ENCODE measurements at regions of chr6 and their contacts with region 1.

Region 1: DNA sequence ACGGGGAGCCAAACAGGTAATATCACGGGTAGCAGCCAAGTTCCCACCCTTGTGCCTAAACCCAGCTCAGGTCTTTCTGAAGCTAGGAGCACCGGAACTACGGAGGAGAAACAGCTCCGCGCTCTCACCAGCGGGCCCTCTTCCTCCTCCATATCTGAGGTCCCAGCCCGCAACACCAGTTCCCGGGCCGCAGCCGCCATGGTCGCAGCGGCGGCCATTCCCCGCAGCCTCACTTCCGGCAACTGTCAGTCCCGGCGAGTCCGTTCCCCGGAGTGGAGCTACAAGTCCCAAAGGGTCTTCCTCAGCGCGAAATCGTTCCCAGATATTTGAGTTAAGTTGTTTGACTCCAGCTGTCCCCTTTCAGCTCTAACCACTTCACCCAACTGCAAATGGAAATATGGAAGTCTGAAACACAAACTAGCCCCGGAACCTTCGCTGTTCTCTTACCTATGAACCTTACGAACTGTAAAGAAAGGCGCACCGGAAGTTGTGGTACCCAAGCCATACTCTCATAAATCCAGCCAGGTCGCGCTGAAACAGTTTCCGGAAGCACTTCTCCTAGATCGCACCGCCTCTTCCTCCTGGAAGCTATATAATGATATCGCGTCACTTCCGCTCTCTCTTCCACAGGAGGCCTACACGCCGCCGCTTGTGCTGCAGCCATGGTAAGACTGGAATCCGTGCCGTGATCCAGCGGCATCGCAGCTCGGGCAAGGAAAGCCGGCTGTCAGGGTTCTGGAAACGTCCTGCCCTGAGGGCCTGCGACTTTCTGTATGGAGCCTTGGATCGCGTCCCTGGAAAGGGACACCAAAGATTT is at the starts of genes RPS18 and VPS52:
- DNase-seq: peak; percentile 98 to 100 (median 99)
- H3K4me3 ChIP-seq: peak within 1 kb of the TSS; percentile 83 to 95 (median 91)
- H3K4me3 Mint-ChIP-seq: peak within 1 kb of the TSS; percentile 96 to 100
- H3K27ac ChIP-seq: peak within 1 kb of the TSS; percentile 93 to 99
- H3K27ac Mint-ChIP-seq: peak within 1 kb of the TSS; percentile 98 to 100 (median 100)
- H3K4me1 ChIP-seq: peaks cover 53 to 60% of the 10 kb centered on the region in 2 donors
- H3K4me1 Mint-ChIP-seq: peaks cover 58% of the 10 kb centered on the region
- H3K27me3 ChIP-seq: no peaks in the 10 kb centered on the region
- H3K27me3 Mint-ChIP-seq: no peaks in the 10 kb centered on the region
- CTCF ChIP-seq: no peak
- polyA plus RNA-seq, gene RPS18: 2,430 to 3,295 (median 2,894) TPM
- polyA plus RNA-seq, gene VPS52: 11.0 to 150 (median 14.5) TPM

Region 2: DNA sequence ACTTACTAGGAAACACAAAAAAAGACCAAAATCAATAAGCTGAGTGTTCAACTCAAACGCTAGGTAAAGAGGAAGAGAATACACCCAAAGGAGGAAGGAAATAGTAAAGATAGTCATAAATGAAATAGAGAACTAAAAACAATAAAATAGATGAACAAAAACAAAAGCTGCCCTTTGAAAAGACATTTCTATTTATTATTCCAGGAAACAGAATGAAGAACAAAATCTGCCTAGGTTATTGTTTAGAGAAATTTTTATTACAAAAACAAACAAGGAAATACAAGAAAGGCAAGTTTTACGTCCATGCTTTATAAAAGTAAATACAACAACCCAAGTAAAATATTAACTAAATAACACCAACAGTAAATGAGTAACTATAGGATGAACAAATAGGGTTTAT is 351.0 kb before region 1 on chr6:
- intact Hi-C with region 1: no loop called
- DNase-seq: peak in 2 of 3 donors; percentile 28 to 42
- H3K4me3 ChIP-seq: peak overlapping the region in 1 of 3 experiments; percentile 25
- H3K4me3 Mint-ChIP-seq: peak overlapping the region in 1 of 2 donors; percentile 64
- H3K27ac ChIP-seq: peak overlapping the region in 1 of 2 donors; percentile 49
- H3K27ac Mint-ChIP-seq: peak overlapping the region in 5 of 7 donors; percentile 0 to 59 (median 41)
- H3K4me1 ChIP-seq: peaks cover 12 to 32% of the 10 kb centered on the region in 2 donors
- H3K4me1 Mint-ChIP-seq: peaks cover 44% of the 10 kb centered on the region
- H3K27me3 ChIP-seq: no peaks in the 10 kb centered on the region
- H3K27me3 Mint-ChIP-seq: peaks cover 0 to 1% (median 0%) of the 10 kb centered on the region in 3 donors
- CTCF ChIP-seq: no peak

Region 3: GRCh38 chr6:33014841-33015634 is 256.6 kb before region 1 on chr6:
- intact Hi-C with region 1: no loop called
- DNase-seq: peak; percentile 79 to 82 (median 82)
- H3K4me3 ChIP-seq: no peak overlapping the region
- H3K4me3 Mint-ChIP-seq: peak overlapping the region in 1 of 2 donors; percentile 61
- H3K27ac ChIP-seq: no peak overlapping the region
- H3K27ac Mint-ChIP-seq: peak overlapping the region in 2 of 7 donors; percentile 33 to 35
- H3K4me1 ChIP-seq: peaks cover 36 to 42% of the 10 kb centered on the region in 2 donors
- H3K4me1 Mint-ChIP-seq: peaks cover 41% of the 10 kb centered on the region
- H3K27me3 ChIP-seq: no peaks in the 10 kb centered on the region
- H3K27me3 Mint-ChIP-seq: no peaks in the 10 kb centered on the region
- CTCF ChIP-seq: peak; percentile 85

Region 4: DNA sequence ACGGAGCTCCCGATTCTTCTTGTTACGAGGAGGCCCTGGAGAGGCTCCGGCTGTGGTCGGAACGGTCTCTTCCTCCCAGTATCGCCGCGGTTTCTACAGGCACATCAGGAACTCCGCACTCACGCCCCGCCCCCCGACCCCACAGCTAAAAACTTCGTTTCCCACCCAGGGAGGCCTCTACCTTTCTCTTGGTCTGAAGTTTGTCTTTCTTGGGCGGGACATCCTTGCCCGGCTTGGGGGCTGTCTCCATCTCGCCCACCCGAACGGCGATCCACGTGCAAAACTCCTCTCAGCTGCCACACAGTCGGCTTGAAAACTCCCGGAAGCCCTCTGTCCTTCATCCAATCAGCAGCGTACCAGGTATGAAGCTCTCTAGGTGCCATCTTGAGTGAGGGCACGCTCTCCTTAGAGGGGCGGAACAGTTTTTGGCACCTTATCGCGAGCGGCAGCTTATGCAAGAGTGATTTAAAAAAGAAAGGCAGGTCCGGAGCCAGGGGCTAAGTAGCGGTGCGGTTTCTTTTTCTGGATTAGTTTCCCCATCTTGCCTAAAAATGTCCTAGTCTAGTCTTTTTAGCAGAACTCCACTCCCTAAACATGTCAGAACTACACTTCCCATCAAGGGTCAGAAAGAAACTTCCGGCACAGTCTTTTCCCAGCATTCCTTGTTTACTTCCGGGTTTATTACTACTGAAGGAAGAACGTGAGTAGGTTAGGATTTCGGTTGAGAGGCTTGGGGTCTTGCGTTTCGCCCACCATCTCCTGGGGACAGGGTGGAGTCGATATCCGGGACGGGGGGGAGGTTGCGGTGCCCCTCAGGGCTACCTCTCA is 17.5 kb after region 1 on chr6 and contains the starts of genes PFDN6 and WDR46:
- intact Hi-C with region 1: loop called in 1 of 2 experiments (anchors 2 kb)
- DNase-seq: peak; percentile 77 to 91 (median 80)
- H3K4me3 ChIP-seq: peak within 1 kb of the TSS; percentile 81 to 99 (median 82)
- H3K4me3 Mint-ChIP-seq: peak within 1 kb of the TSS; percentile 99 to 100
- H3K27ac ChIP-seq: peak within 1 kb of the TSS; percentile 30 to 75
- H3K27ac Mint-ChIP-seq: peak within 1 kb of the TSS; percentile 89 to 96 (median 94)
- H3K4me1 ChIP-seq: peaks cover 19 to 23% of the 10 kb centered on the region in 2 donors
- H3K4me1 Mint-ChIP-seq: peaks cover 33% of the 10 kb centered on the region
- H3K27me3 ChIP-seq: no peaks in the 10 kb centered on the region
- H3K27me3 Mint-ChIP-seq: no peaks in the 10 kb centered on the region
- CTCF ChIP-seq: no peak
- polyA plus RNA-seq, gene PFDN6: 26.0 to 36.2 (median 28.4) TPM
- polyA plus RNA-seq, gene WDR46: 33.3 to 41.0 (median 37.3) TPM